BJ (cell line): ENCODE measurements at regions of chr1 and their contacts with region 1.

Region 1: GRCh38 chr1:17335821-17336710 is 28.1 kb downstream of the PADI4 start:
- DNase-seq: no peak
- H3K4me3 ChIP-seq: no peak overlapping the region
- H3K27me3 ChIP-seq: peaks cover 6% of the 10 kb centered on the region
- CTCF ChIP-seq: peak; percentile 90

Region 2: GRCh38 chr1:17059739-17060460 is 276.2 kb before region 1 on chr1:
- CTCF ChIA-PET with region 1: interaction called, 14 read pairs
- POLR2A ChIA-PET with region 1: no interaction called
- DNase-seq: peak; percentile 4
- H3K4me3 ChIP-seq: no peak overlapping the region
- H3K27me3 ChIP-seq: no peaks in the 10 kb centered on the region; the same call in 1 of the 2 replicates
- CTCF ChIP-seq: peak; percentile 84

Region 3: GRCh38 chr1:17808816-17809215 is 472.8 kb after region 1 on chr1:
- CTCF ChIA-PET with region 1: no interaction called
- POLR2A ChIA-PET with region 1: no interaction called
- DNase-seq: no peak
- H3K4me3 ChIP-seq: no peak overlapping the region
- H3K27me3 ChIP-seq: peaks cover 2% of the 10 kb centered on the region; the same call in 1 of the 2 replicates
- CTCF ChIP-seq: no peak